ENCODE measurements at regions of chr9 and their contacts with region 1.

Region 1: GRCh38 chr9:126844085-126844484 is 16.4 kb upstream of the ZBTB34 start:
- DNase-seq: no peak
- ATAC-seq: peak; percentile 55
- H3K4me3 Mint-ChIP-seq: no peak overlapping the region
- H3K27ac Mint-ChIP-seq: no peak overlapping the region
- H3K4me1 Mint-ChIP-seq: peaks cover 16% of the 10 kb centered on the region
- H3K27me3 Mint-ChIP-seq: peaks cover 2% of the 10 kb centered on the region
- CTCF ChIP-seq: no peak

Region 2: DNA sequence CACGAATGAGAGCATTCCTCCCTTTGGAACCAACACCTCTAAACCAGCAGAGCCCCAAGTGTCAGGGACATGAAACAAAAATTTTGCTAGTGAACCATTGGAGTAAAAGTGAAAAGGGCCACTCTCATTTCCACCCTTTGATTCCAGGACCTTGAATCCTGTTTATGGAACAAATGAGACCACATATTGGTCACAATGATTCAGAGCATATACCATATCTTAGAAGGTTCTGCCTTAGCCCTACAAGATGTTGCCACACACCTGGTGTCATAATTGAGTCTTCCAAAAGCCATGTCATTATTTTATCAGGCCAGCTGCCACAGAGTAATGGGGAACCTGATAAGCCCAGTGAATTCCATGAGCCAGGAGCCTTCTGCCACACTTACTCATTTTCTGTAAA is 105.5 kb before region 1 on chr9:
- CTCF ChIA-PET with region 1: no interaction called
- POLR2A ChIA-PET with region 1: no interaction called
- intact Hi-C with region 1: no loop called
- DNase-seq: no peak
- ATAC-seq: no peak
- H3K4me3 Mint-ChIP-seq: no peak overlapping the region
- H3K27ac Mint-ChIP-seq: no peak overlapping the region
- H3K4me1 Mint-ChIP-seq: peaks cover 2% of the 10 kb centered on the region
- H3K27me3 Mint-ChIP-seq: no peaks in the 10 kb centered on the region
- CTCF ChIP-seq: no peak

Region 3: DNA sequence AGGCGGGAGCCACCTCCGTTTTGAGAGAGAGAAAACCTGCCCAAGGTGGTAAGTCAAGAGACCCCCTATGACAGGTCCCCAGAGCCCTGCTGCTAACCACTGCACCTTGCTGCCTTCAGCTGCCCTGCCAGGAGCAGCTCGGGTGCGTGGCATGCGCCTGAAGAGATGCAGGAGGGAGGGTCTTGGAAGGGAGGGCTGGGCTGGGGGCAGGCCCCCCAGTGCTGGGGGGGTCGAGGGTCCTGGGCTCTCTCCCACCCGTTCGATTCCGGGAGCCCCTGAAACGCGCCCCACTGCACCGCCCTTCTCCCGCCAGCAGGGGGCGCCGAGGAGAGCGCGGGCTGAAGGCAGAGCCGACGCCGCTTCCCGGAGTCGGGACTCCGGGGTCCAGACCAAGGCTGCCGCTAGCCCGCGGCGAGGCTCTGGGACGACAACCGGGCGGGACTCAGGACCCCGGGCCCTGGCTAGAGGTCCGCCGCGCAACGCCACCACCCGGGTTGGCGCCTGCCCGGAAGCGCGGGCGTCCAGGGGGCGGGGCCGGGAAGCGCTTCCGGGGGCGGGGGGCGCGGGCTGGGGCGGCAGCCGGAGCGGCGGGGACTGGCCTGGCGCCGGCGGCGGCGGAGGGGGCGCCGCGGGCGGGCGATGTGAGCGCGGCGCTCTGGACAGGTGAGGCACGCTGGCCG is 16.1 kb after region 1 on chr9 and contains the start of gene ZBTB34:
- CTCF ChIA-PET with region 1: interaction called, 16 read pairs
- POLR2A ChIA-PET with region 1: interaction called, 4 read pairs
- intact Hi-C with region 1: no loop called
- DNase-seq: peak; percentile 71
- ATAC-seq: peak; percentile 87
- H3K4me3 Mint-ChIP-seq: peak within 1 kb of the TSS; percentile 77
- H3K27ac Mint-ChIP-seq: peak within 1 kb of the TSS; percentile 84
- H3K4me1 Mint-ChIP-seq: peaks cover 29% of the 10 kb centered on the region
- H3K27me3 Mint-ChIP-seq: peaks cover 2% of the 10 kb centered on the region
- CTCF ChIP-seq: peak; percentile 100
- total RNA-seq, gene ZBTB34: 4.6 to 4.7 TPM